ENCODE measurements at regions of chr12 and their contacts with region 1.

Region 1: DNA sequence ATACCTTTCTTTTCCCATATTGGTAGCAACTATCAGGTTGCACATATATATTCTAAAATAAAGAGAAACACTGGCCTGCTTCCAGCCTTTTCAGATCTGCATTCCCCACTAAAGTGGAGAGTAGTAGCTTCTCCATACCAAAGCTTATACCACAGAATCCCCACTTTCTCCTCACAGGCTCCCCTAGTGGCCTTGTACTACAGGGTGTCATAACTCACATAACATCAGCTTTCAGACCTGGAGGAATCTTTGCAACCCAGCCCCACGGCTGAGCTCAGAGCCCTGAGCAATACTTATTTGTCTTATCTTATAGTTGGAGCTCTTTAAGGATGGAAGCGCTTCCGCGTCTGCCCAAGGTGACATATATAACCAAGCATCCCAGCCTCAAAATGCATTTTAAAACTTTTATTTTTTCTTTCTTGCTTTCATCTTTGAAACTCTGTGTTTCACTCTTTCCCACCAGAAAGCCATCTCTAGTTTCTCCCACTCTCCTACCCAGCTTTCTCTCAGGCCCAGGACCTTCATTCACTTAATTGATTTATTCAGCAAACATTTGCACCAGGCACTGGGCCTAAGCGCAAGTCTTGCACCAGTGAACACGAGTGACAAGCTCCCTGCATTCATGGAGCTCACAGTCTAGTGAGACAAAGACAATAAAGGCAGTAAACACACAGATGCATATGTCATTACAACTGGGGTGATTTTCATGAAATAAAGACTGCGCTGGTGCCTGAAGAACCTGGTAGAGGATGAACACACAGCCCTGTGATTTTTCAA is 254.7 kb downstream of the IPO8 start:
- DNase-seq: no peak
- H3K4me3 ChIP-seq: no peak overlapping the region
- H3K27ac ChIP-seq: no peak overlapping the region
- H3K27me3 ChIP-seq: no peaks in the 10 kb centered on the region
- CTCF ChIP-seq: peak; percentile 74

Region 2: GRCh38 chr12:29414368-29414767 is 1026.6 kb before region 1 on chr12:
- CTCF ChIA-PET with region 1: interaction called, 10 read pairs
- POLR2A ChIA-PET with region 1: no interaction called
- DNase-seq: no peak
- H3K4me3 ChIP-seq: no peak overlapping the region
- H3K27ac ChIP-seq: no peak overlapping the region
- H3K27me3 ChIP-seq: no peaks in the 10 kb centered on the region
- CTCF ChIP-seq: no peak

Region 3: GRCh38 chr12:30417697-30418231 is 23.2 kb before region 1 on chr12:
- CTCF ChIA-PET with region 1: interaction called, 7 read pairs
- POLR2A ChIA-PET with region 1: interaction called, 10 read pairs
- DNase-seq: peak; percentile 48
- H3K4me3 ChIP-seq: no peak overlapping the region
- H3K27ac ChIP-seq: peak overlapping the region; percentile 33
- H3K27me3 ChIP-seq: no peaks in the 10 kb centered on the region
- CTCF ChIP-seq: no peak

Region 4: DNA sequence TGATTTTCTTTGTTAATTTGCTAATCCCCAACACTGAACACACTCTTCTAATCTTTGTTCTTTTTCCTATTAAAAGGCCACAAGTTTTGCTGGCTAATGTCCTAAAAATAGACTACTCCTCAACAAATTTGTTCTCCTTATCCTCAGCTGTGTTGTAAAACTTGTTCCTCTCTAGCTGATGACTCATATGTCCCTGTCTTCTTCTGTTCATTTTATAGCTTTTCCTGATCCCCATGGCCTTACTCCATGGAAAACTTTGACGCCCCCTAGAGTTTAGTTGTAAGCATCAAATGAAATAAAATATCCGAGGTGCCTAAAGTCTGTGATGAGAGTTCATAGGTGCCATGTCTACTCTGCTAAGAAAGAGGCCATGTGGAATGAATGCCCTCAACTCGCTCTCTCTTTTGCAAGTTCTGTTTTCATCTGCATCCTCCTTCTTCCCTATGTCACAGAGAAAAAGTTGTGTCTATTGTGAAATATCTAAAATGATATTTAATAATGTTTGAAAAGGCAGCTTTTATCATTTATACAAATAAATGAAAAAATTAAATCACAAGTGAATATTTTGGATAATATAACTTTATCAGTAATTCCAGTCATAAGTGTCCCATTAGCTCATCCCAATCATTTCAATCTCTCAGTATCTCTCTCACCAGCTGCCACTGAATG is 16.7 kb after region 1 on chr12:
- CTCF ChIA-PET with region 1: interaction called, 15 read pairs
- POLR2A ChIA-PET with region 1: interaction called, 4 read pairs
- DNase-seq: peak; percentile 26
- H3K4me3 ChIP-seq: no peak overlapping the region
- H3K27ac ChIP-seq: no peak overlapping the region
- H3K27me3 ChIP-seq: no peaks in the 10 kb centered on the region
- CTCF ChIP-seq: peak; percentile 43

Measured in AG04450 (cell line).